ENCODE measurements at regions of chr19 and their contacts with region 1.

Region 1: DNA sequence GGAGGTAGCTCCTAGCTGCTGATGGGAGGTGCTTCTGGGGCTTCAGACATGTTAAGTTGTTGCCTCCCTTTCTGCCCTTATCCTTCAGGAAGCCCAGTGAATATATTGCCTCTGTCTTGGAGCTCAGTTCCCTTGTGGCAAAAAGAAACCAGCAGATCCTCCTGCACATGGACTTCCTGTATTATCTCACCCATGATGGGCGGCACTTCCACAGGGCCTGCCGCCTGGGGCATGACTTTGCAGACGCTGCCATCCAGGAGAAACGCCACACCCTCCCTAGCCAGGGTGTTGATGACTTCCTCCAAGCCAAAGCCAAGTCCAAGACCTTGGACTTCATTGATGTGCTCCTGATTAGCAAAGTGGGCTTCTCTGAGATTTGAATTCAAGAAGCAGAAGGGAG is 6.0 kb upstream of the CYP4F12 start:
- DNase-seq: no peak
- H3K4me3 ChIP-seq: no peak overlapping the region
- H3K27ac ChIP-seq: no peak overlapping the region
- H3K4me1 ChIP-seq: peaks cover 13% of the 10 kb centered on the region
- H3K27me3 ChIP-seq: no peaks in the 10 kb centered on the region
- CTCF ChIP-seq: no peak

Region 2: DNA sequence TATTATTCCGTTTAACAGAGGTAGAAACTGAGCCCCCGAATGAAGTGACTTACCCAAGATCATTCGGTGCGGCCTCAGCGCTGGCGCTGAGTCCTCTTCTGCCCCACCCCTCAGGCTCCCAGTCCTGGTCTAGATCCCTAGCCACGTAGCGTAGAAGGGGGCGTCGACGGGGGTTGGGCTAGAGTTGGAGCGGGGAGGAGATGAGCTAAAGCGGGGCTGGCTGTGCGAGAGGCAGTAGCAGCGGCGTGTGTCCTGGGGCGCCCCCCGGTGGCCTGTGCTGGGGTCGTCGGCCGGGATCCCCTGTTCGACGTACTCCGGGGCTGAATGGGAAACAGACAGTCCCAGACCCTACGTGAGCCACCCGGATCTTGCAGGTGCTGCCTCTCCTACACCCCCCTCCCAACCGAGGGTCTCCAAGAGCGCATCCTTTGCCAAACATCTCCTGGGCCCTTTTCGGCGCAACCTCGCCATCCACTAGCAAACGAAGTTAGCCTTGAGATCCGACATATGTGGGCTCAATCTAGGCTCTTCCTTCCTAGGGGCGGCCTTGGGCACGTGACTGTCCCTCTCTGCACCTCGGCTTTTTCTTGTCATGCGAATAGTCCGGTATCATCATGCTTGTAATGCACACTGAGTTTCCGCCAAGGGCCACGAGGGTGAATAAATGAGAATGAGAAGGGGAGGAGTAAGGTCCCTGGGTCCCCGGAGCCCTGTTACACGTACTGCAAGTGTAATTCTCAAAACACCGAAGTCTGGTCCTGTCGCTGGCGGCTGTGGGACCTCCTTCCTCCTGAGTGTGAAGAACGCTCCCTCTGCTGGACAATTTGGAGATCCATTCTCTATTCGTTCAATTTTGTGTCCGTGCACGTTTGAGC is 110.9 kb before region 1 on chr19:
- CTCF ChIA-PET with region 1: no interaction called
- POLR2A ChIA-PET with region 1: no interaction called
- intact Hi-C with region 1: no loop called
- DNase-seq: peak; percentile 92 to 94
- H3K4me3 ChIP-seq: peak overlapping the region; percentile 52; the same call in 1 of the 2 replicates
- H3K27ac ChIP-seq: no peak overlapping the region
- H3K4me1 ChIP-seq: peaks cover 12% of the 10 kb centered on the region
- H3K27me3 ChIP-seq: no peaks in the 10 kb centered on the region
- CTCF ChIP-seq: peak; percentile 78

Region 3: GRCh38 chr19:15790096-15790495 is 123.2 kb after region 1 on chr19:
- CTCF ChIA-PET with region 1: interaction called, 11 read pairs
- POLR2A ChIA-PET with region 1: no interaction called
- intact Hi-C with region 1: no loop called
- DNase-seq: peak in 1 of 2 experiments; percentile 59
- H3K4me3 ChIP-seq: no peak overlapping the region
- H3K27ac ChIP-seq: no peak overlapping the region
- H3K4me1 ChIP-seq: no peaks in the 10 kb centered on the region
- H3K27me3 ChIP-seq: peaks cover 15% of the 10 kb centered on the region; the same call in 1 of the 2 replicates
- CTCF ChIP-seq: no peak

Region 4: GRCh38 chr19:15874821-15875474 is 208.1 kb after region 1 on chr19:
- CTCF ChIA-PET with region 1: no interaction called
- POLR2A ChIA-PET with region 1: no interaction called
- intact Hi-C with region 1: no loop called
- DNase-seq: no peak
- H3K4me3 ChIP-seq: no peak overlapping the region
- H3K27ac ChIP-seq: no peak overlapping the region
- H3K4me1 ChIP-seq: peaks cover 10% of the 10 kb centered on the region
- H3K27me3 ChIP-seq: 0 out of 2 replicates have a peak, but pooled peaks cover 3% of the 10 kb centered on the region
- CTCF ChIP-seq: no peak

Measured in PC-9 (cell line).